OCI-LY7 (cell line): ENCODE measurements at regions of chr19 and their contacts with region 1.

Region 1: DNA sequence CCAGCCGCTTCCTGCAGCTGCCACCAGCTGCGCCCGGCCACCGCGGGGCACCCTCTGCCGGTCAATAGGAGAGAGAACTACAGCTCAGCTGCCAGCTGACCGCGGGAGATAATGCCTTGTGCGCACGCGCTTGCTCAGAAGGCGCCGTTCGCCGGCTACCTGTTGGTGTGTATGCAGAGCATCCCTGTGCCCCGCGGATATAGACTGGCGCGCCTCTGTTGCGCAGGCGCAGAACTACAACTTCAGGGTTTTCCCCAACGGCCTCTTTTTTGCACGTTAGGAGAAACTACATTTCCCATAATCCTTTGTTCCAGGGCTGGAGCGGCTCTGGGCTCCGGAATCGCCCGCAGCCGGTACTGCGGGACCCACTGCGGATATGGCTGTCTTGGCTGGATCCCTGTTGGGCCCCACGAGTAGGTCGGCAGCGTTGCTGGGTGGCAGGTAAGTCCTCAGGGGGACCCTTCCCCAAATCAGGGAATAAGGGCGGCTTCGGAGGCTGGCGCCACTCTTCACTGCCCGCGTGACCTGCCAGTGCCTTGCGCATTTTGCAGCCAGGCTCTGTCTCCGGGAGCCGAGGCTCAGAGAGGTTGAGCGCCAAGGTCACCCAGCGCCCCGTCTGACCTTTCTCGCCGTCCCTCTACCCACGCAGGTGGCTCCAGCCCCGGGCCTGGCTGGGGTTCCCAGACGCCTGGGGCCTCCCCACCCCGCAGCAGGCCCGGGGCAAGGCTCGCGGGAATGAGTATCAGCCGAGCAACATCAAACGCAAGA is at the start of gene MRPL34:
- DNase-seq: peak; percentile 100
- H3K4me3 ChIP-seq: peak within 1 kb of the TSS; percentile 89
- H3K27ac ChIP-seq: peak within 1 kb of the TSS; percentile 90
- H3K4me1 ChIP-seq: peaks cover 49% of the 10 kb centered on the region
- CTCF ChIP-seq: peak; percentile 84
- total RNA-seq, gene MRPL34: 174 and 182 TPM in 2 replicates

Region 2: DNA sequence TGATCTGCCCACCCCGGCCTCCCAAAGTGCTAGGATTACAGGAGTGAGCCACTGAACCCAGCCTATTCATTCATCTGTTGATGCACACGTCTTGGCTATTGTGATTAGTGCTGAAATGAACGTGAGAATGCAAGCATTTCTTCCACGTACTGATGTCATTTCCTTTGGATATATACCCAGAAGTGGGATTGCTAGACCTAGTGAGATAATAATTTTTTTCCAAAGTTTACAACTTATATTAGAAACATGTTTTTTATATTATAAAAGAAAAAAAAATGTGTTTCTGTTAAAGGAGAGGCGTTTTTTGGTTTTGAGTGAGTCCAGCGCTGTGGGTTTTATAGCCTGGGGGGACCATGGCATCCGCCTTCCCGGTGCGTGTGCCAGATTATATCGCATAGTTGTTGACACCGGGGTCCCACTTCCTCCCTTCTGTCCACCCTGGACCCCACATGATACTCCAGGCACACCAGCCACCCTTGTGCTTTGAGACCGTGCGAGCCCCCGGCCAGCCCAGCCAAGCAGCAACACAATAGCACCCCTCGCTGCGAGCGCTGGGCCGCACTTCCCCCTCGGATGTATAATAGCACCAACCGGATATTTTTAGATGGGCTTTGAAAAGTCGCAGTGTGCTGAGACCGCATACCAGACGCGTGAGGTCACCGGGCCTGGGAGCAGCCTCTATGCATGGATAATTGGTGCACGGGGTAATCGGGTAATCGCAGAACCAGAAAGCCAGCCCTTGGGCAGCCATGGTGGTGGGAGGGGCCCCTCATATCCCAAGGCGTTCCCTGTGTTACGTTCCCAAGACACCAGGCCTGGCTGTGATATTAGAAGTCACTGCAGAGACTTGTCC is 170.5 kb before region 1 on chr19:
- CTCF ChIA-PET with region 1: no interaction called
- POLR2A ChIA-PET with region 1: no interaction called
- intact Hi-C with region 1: no loop called
- DNase-seq: peak; percentile 91
- H3K4me3 ChIP-seq: peak overlapping the region; percentile 39
- H3K27ac ChIP-seq: peak overlapping the region; percentile 74
- H3K4me1 ChIP-seq: peaks cover 57% of the 10 kb centered on the region
- CTCF ChIP-seq: peak; percentile 54; the same call in 1 of the 2 replicates

Region 3: GRCh38 chr19:17292286-17293097 is 13.2 kb before region 1 on chr19:
- CTCF ChIA-PET with region 1: interaction called, 3 read pairs
- POLR2A ChIA-PET with region 1: interaction called, 6 read pairs
- intact Hi-C with region 1: loop called (anchors 1 kb)
- DNase-seq: peak; percentile 87
- H3K4me3 ChIP-seq: peak overlapping the region; percentile 77
- H3K27ac ChIP-seq: peak overlapping the region; percentile 63
- H3K4me1 ChIP-seq: peaks cover 27% of the 10 kb centered on the region
- CTCF ChIP-seq: peak; percentile 78

Region 4: GRCh38 chr19:17334414-17335409 is 29.0 kb after region 1 on chr19 and contains the start of gene ANO8:
- CTCF ChIA-PET with region 1: interaction called, 8 read pairs
- POLR2A ChIA-PET with region 1: interaction called, 15 read pairs
- intact Hi-C with region 1: loop called (anchors 1 kb)
- DNase-seq: peak; percentile 98
- H3K4me3 ChIP-seq: peak within 1 kb of the TSS; percentile 86
- H3K27ac ChIP-seq: peak within 1 kb of the TSS; percentile 38
- H3K4me1 ChIP-seq: peaks cover 39% of the 10 kb centered on the region
- CTCF ChIP-seq: no peak
- total RNA-seq, gene ANO8: 4.3 and 5.9 TPM in 2 replicates

Region 5: GRCh38 chr19:17555480-17555928 is 249.8 kb after region 1 on chr19 and contains the start of gene COLGALT1:
- CTCF ChIA-PET with region 1: no interaction called
- POLR2A ChIA-PET with region 1: no interaction called
- intact Hi-C with region 1: no loop called
- DNase-seq: peak; percentile 100
- H3K4me3 ChIP-seq: peak within 1 kb of the TSS; percentile 88
- H3K27ac ChIP-seq: peak within 1 kb of the TSS; percentile 44
- H3K4me1 ChIP-seq: peaks cover 14% of the 10 kb centered on the region
- CTCF ChIP-seq: no peak
- total RNA-seq, gene COLGALT1: 43.0 and 49.6 TPM in 2 replicates

Region 6: DNA sequence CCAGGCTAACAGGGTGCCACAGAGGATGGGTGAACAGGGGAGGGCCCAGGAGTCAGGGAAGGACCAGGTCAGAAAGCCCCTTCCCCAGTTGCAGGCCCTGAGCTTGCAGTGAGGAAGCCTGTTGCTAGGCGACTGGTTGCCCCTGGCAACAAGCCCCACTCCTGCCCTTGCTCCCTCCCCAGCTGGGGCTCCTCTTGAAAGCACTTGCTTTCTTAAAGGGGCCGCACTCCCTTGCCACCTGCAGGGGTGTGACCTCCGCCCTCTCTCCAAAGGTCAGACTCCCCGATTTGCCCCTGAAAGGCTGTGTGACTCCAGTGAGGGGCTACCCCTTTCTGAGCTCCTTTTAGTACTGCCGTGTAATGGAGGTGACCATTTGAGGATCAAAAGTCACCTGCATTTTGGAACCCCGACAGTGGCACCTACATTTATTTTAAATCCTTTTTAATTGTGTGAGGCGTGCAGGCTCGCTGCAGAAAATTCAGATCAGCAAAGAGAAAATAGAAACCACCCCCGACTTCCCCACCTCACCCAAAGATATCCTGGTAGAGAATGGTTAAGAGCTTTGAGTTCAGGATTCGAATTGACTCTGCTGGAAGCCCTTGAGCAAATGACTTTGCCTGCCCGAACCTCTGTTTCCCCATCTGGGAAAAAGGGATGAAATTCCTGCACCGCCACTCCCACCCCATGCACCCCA is 450.4 kb after region 1 on chr19:
- CTCF ChIA-PET with region 1: no interaction called
- POLR2A ChIA-PET with region 1: no interaction called
- intact Hi-C with region 1: loop called (anchors 5 kb)
- DNase-seq: peak; percentile 91
- H3K4me3 ChIP-seq: peak overlapping the region; percentile 54
- H3K27ac ChIP-seq: peak overlapping the region; percentile 93
- H3K4me1 ChIP-seq: peaks cover 70% of the 10 kb centered on the region
- CTCF ChIP-seq: no peak